ENCODE measurements at regions of chr18 and their contacts with region 1.

Region 1: GRCh38 chr18:21111341-21112139 is at the start of gene ROCK1:
- DNase-seq: peak; percentile 98 to 100 (median 99)
- ATAC-seq: peak; percentile 85
- H3K4me3 ChIP-seq: peak within 1 kb of the TSS; percentile 94 to 95
- H3K4me3 Mint-ChIP-seq: no peak within 1 kb of the TSS
- H3K27ac ChIP-seq: peak within 1 kb of the TSS; percentile 89 to 93
- H3K27ac Mint-ChIP-seq: peak within 1 kb of the TSS; percentile 90
- H3K4me1 ChIP-seq: peaks cover 31% of the 10 kb centered on the region
- H3K4me1 Mint-ChIP-seq: peaks cover 3% of the 10 kb centered on the region
- H3K27me3 ChIP-seq: no peaks in the 10 kb centered on the region
- H3K27me3 Mint-ChIP-seq: no peaks in the 10 kb centered on the region
- CTCF ChIP-seq: no peak
- total RNA-seq, gene ROCK1: 88.5 to 94.7 TPM

Region 2: DNA sequence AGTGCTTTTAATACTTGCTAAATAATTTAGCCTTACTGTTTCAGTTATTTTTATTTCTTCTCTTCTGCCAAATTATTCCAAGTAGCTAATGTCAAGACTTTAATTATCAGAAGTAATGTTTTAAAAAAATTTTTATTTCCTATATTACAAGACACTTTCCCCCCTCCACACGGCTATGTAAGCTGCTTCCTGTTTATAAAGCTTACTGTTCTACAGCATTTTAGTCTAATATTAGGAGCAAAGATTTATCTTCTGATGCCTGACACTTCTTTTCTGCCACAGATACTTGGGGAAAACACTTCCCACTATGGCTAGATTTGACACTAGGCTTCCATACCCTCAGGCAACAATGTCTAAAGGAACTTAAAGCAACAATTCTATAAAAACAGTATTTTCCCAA is 62.2 kb before region 1 on chr18:
- CTCF ChIA-PET with region 1: no interaction called
- POLR2A ChIA-PET with region 1: interaction called, 8 read pairs
- intact Hi-C with region 1: loop called (anchors 2 kb)
- DNase-seq: peak in 2 of 9 experiments; percentile 3 to 9
- ATAC-seq: no peak
- H3K4me3 ChIP-seq: no peak overlapping the region
- H3K4me3 Mint-ChIP-seq: no peak overlapping the region
- H3K27ac ChIP-seq: peak overlapping the region; percentile 3 to 10
- H3K27ac Mint-ChIP-seq: peak overlapping the region; percentile 58
- H3K4me1 ChIP-seq: peaks cover 35% of the 10 kb centered on the region
- H3K4me1 Mint-ChIP-seq: peaks cover 59% of the 10 kb centered on the region
- H3K27me3 ChIP-seq: no peaks in the 10 kb centered on the region
- H3K27me3 Mint-ChIP-seq: no peaks in the 10 kb centered on the region
- CTCF ChIP-seq: no peak

Region 3: DNA sequence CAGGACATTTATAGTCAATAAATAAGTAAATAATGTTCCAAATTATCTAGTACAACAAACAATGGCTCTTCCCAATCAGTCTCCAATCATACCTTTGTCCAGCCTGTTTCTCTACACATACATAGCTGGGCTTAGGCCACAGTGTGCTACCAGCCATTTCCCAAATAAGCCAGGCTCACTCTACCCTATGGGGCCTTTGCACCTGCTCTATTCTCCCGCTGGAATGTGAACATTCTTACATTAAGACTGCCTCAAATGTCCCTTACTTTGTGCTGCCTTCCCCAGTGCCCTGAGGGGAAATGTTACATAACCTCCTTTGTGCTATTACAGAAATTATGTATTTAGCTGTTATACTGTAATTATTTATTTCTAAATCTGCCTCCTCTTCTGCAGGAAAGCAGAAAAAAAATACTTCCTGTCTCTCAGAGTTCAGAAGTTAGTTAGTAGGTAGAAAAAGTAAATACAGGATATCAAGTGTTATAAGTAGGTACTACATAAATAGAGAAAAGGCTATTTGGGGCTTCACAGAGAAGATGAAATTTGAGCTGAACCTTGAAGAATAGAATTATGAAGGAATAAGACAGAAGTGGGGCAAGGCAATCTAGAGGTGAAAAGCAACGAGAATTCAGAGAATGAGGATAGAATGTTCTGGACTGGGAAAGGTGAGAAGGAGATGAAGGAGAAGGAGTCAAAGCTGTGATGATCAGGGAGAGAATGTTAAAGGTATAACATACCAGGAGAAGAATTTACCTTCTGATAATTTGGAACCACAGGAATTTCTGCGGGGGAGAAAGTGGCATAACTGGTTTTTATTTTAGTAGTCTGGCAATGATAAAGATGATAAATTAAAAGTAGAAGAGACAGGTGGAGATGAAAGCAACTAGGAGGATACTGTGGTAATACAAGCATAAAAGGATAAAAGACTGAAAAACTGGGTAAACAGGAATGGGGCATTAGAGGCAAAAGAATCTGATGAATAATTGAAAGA is 36.9 kb before region 1 on chr18:
- CTCF ChIA-PET with region 1: no interaction called
- POLR2A ChIA-PET with region 1: interaction called, 4 read pairs
- intact Hi-C with region 1: loop called in 1 of 2 experiments (anchors 1 kb)
- DNase-seq: no peak
- ATAC-seq: no peak
- H3K4me3 ChIP-seq: no peak overlapping the region
- H3K4me3 Mint-ChIP-seq: peak overlapping the region; percentile 45
- H3K27ac ChIP-seq: no peak overlapping the region
- H3K27ac Mint-ChIP-seq: peak overlapping the region; percentile 66
- H3K4me1 ChIP-seq: peaks cover 59% of the 10 kb centered on the region
- H3K4me1 Mint-ChIP-seq: peaks cover 77% of the 10 kb centered on the region
- H3K27me3 ChIP-seq: no peaks in the 10 kb centered on the region
- H3K27me3 Mint-ChIP-seq: no peaks in the 10 kb centered on the region
- CTCF ChIP-seq: no peak

Region 4: DNA sequence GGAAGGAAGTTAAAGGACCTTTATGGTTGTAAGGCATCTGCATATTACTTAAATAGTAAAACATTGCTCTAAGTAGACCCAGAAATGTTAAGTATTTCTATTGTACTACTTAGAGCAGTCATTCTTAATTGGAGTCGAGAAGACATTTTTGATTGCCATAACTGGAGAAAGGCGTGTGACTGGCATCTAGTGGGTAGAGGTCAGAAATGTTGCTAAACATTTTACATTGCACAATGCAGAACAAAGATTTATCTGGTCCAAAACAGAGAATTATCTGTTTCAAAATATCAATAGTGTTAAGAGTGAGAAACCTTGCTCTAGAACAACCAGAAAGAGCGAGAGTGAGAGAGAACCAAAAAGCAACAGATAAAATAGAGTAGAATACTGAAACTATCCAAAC is 23.4 kb after region 1 on chr18:
- CTCF ChIA-PET with region 1: no interaction called
- POLR2A ChIA-PET with region 1: no interaction called
- intact Hi-C with region 1: loop called in 1 of 2 experiments (anchors 1 kb)
- DNase-seq: peak in 6 of 9 experiments; percentile 19 to 64 (median 42)
- ATAC-seq: peak; percentile 65
- H3K4me3 ChIP-seq: no peak overlapping the region
- H3K4me3 Mint-ChIP-seq: no peak overlapping the region
- H3K27ac ChIP-seq: no peak overlapping the region
- H3K27ac Mint-ChIP-seq: no peak overlapping the region
- H3K4me1 ChIP-seq: no peaks in the 10 kb centered on the region
- H3K4me1 Mint-ChIP-seq: no peaks in the 10 kb centered on the region
- H3K27me3 ChIP-seq: no peaks in the 10 kb centered on the region
- H3K27me3 Mint-ChIP-seq: no peaks in the 10 kb centered on the region
- CTCF ChIP-seq: peak; percentile 75

Region 5: DNA sequence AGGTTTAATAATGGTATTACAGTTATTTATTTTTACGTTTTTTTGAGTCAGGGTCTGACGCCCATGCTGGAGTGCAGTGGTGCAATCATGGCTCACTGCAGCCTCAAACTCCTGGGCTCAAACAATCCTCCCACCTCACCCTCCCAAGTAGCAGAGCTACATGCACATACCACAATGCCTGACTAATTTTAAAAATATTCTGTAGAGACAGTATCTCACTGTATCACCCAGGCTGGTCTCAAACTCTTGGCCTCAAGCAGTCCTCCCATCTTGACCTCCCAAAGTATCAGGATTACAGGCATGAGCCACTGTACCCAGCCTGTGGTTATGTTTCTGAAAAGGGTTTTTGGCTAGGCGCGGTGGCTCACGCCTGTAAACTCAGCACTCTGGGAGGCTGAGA is 368.2 kb after region 1 on chr18:
- CTCF ChIA-PET with region 1: no interaction called
- POLR2A ChIA-PET with region 1: no interaction called
- intact Hi-C with region 1: no loop called
- DNase-seq: no peak
- ATAC-seq: no peak
- H3K4me3 ChIP-seq: no peak overlapping the region
- H3K4me3 Mint-ChIP-seq: no peak overlapping the region
- H3K27ac ChIP-seq: no peak overlapping the region
- H3K27ac Mint-ChIP-seq: no peak overlapping the region
- H3K4me1 ChIP-seq: no peaks in the 10 kb centered on the region
- H3K4me1 Mint-ChIP-seq: no peaks in the 10 kb centered on the region
- H3K27me3 ChIP-seq: peaks cover 0 to 2% of the 10 kb centered on the region in 2 experiments
- H3K27me3 Mint-ChIP-seq: peaks cover 18% of the 10 kb centered on the region
- CTCF ChIP-seq: no peak

Region 6: DNA sequence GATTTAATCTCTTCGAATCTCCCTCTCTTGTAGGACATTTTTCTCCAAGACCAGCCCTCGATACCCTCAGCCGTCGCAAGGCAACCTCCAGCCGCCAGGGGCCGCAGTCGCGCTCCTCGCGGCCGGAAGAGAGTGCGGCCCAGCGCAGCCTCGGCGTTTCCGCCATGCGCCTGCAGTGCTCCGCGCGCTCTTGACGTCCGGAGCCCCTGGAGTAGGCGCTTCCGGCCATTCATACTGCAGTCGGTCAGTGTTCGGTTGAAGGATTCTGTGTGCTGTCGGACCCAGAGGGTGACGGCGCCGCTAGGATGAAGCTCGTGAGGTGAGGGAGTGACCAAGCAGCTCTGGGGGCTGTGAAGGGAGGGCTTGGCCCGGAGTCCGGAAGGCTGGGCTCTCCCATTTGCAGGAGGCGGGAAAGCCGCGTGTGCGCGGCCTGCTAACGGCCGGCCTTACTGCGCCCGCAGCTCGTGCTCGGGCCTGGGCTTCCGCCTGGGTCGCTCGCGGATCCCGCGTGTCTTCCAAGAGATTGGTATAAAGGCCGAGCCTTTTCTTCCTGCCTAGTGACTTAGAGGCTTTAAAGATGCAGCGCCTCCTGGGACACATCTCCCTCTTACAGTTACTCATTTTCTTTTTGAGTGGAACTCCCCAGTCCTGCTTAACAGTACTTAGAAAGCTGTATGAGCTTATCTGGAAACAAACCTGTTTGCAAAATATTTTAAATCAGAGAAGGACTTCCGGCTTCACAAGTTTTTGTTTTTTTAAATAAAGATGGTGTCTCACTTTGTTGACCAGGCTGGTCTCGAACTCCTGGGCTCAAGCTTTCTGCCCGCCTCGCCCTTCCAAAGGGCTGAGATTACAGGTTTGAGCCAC is 500.8 kb after region 1 on chr18 and contains the start of gene SNRPD1:
- CTCF ChIA-PET with region 1: no interaction called
- POLR2A ChIA-PET with region 1: no interaction called
- intact Hi-C with region 1: loop called in 1 of 2 experiments (anchors 5 kb)
- DNase-seq: peak; percentile 78 to 94 (median 86)
- ATAC-seq: peak; percentile 98
- H3K4me3 ChIP-seq: peak within 1 kb of the TSS; percentile 83 to 94
- H3K4me3 Mint-ChIP-seq: peak within 1 kb of the TSS; percentile 98
- H3K27ac ChIP-seq: peak within 1 kb of the TSS; percentile 84 to 87
- H3K27ac Mint-ChIP-seq: peak within 1 kb of the TSS; percentile 98
- H3K4me1 ChIP-seq: peaks cover 29% of the 10 kb centered on the region
- H3K4me1 Mint-ChIP-seq: peaks cover 44% of the 10 kb centered on the region
- H3K27me3 ChIP-seq: no peaks in the 10 kb centered on the region
- H3K27me3 Mint-ChIP-seq: no peaks in the 10 kb centered on the region
- CTCF ChIP-seq: peak; percentile 94
- total RNA-seq, gene SNRPD1: 34.5 to 41.1 TPM

Region 7: DNA sequence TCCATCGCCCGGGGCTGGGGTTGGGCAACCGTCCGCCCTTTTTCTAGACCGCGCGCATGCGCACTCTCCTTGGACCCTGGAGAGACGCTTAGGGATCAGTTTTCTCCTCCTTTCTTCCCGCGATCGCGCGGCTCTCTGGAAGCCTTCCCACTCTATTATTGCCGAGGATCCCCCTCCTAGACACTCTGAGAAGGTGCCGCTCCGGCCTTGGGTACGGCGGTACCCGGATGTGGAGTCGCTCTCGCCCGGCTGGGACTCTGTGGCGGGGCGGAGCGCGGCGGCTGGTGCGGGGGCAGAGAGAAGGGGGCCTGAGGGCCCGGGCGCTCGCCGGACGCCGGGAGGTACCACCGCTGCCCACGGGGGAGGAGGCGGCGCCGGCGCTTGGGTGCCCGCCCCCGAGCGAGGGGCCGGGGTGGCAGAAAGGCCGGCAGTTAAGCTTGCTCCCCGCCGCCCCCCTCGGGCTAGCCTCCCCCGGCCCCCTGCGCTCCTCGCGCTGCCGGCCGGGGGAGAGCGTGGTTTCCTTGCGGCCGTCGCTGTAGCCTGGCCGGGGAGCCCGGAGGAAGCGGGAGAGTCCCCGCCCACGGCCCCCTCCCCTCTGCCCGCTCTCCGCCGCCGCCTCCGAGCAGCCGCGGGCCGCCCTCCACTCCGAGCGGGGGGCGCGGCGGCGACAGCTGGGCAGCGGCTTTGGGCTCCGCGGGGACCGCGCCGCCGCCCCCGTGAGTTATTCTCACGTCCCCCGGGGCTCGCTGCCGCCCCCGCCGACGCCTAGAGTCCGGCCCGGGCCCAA is 629.4 kb after region 1 on chr18 and contains the start of gene MIB1:
- CTCF ChIA-PET with region 1: no interaction called
- POLR2A ChIA-PET with region 1: no interaction called
- intact Hi-C with region 1: loop called (anchors 1 to 10 kb)
- DNase-seq: peak; percentile 22 to 100 (median 98)
- ATAC-seq: peak; percentile 56
- H3K4me3 ChIP-seq: peak within 1 kb of the TSS; percentile 71 to 93
- H3K4me3 Mint-ChIP-seq: peak within 1 kb of the TSS; percentile 97
- H3K27ac ChIP-seq: peak within 1 kb of the TSS; percentile 75 to 78
- H3K27ac Mint-ChIP-seq: peak within 1 kb of the TSS; percentile 96
- H3K4me1 ChIP-seq: peaks cover 20% of the 10 kb centered on the region
- H3K4me1 Mint-ChIP-seq: peaks cover 36% of the 10 kb centered on the region
- H3K27me3 ChIP-seq: no peaks in the 10 kb centered on the region
- H3K27me3 Mint-ChIP-seq: no peaks in the 10 kb centered on the region
- CTCF ChIP-seq: no peak
- total RNA-seq, gene MIB1: 8.7 to 8.9 TPM